ENCODE measurements at regions of chr5 and their contacts with region 1.

Region 1: GRCh38 chr5:154712518-154713381 is 42.4 kb upstream of the LARP1 start:
- DNase-seq: no peak
- H3K4me3 Mint-ChIP-seq: no peak overlapping the region
- H3K27ac Mint-ChIP-seq: no peak overlapping the region
- H3K4me1 Mint-ChIP-seq: peaks cover 22% of the 10 kb centered on the region
- H3K27me3 Mint-ChIP-seq: no peaks in the 10 kb centered on the region

Region 2: DNA sequence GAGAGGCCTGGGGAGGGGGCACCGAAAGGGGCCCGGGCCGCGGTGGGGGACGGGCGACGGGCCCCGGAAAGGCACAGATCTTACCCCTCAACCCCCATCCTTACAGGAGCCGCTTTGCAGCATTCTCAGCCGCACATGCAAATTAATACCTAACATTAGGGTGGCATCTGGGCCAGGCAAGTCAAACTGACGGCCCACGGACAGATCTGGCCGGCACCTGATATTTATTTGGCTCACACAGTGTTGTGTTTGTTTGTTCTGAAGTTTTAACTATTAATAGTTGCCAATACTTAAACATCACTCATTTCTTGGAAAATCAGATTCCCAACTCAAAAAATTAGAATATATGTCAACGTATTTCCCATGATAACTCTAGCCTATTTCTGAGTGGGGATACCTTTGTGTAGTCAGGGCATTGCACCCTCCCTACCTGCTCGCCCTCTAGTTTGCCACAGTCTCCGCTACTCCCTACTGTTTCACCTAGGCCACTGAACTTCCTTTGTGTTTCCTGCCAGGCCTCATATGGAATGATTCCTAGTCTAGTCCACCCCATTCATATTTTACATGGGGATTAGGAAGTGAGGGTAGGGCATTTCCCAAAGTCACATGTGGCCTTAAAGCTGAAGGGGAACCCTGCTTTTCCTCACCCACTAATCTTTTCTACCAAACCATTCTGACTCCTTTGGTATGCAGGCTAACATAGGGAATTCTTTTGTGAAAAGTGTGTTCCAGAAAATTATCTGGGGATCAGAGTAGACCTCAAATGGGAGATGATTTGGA is 29.5 kb before region 1 on chr5:
- CTCF ChIA-PET with region 1: no interaction called
- POLR2A ChIA-PET with region 1: interaction called, 13 read pairs
- DNase-seq: no peak
- H3K4me3 Mint-ChIP-seq: peak overlapping the region; percentile 53
- H3K27ac Mint-ChIP-seq: peak overlapping the region; percentile 61
- H3K4me1 Mint-ChIP-seq: peaks cover 5% of the 10 kb centered on the region
- H3K27me3 Mint-ChIP-seq: peaks cover 20% of the 10 kb centered on the region

Region 3: DNA sequence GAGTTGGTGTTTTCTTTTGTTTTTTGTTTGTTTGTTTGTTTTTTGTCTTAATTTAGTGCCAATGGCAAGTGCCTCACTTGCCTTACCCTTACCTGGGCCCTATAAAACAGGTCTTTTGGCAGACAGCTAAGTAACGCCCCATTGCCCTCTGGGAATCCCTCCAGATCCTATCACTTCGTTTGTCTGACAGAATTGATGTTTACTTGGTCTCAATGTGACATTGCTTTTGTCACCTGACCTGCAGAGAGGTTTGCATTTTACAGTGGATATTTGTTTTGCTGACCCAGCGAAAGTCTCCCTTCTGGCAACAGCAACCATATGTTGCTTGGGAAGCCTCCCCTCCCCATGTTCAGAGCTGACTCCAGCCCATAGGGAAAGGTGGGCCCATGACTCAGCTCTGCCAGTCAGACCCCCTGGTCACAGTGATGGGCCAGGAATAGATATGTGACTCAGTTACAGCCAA is 11.6 kb before region 1 on chr5:
- CTCF ChIA-PET with region 1: no interaction called
- POLR2A ChIA-PET with region 1: no interaction called
- DNase-seq: no peak
- H3K4me3 Mint-ChIP-seq: no peak overlapping the region
- H3K27ac Mint-ChIP-seq: no peak overlapping the region
- H3K4me1 Mint-ChIP-seq: no peaks in the 10 kb centered on the region
- H3K27me3 Mint-ChIP-seq: peaks cover 5% of the 10 kb centered on the region